ENCODE measurements at regions of chr2 and their contacts with region 1.

Region 1: GRCh38 chr2:104849618-104850141 is 4.2 kb upstream of the POU3F3 start:
- DNase-seq: peak; percentile 63
- H3K4me3 ChIP-seq: peak overlapping the region in 1 of 2 experiments; percentile 39; a peak in 1 of 4 replicates
- H3K27ac ChIP-seq: no peak overlapping the region
- H3K4me1 ChIP-seq: peaks cover 0 to 6% of the 10 kb centered on the region in 2 experiments; a peak in 1 of 4 replicates
- H3K27me3 ChIP-seq: peaks cover 59% of the 10 kb centered on the region
- CTCF ChIP-seq: peak; percentile 91
- EP300 ChIP-seq: no peak
- RAD21 ChIP-seq: peak; percentile 81

Region 2: GRCh38 chr2:103959174-103960128 is 890.2 kb before region 1 on chr2:
- CTCF ChIA-PET with region 1: interaction called, 60 read pairs
- POLR2A ChIA-PET with region 1: no interaction called
- DNase-seq: peak; percentile 35
- H3K4me3 ChIP-seq: peak overlapping the region in 1 of 2 experiments; percentile 33; a peak in 1 of 4 replicates
- H3K27ac ChIP-seq: no peak overlapping the region
- H3K4me1 ChIP-seq: no peaks in the 10 kb centered on the region
- H3K27me3 ChIP-seq: no peaks in the 10 kb centered on the region
- CTCF ChIP-seq: peak; percentile 64
- EP300 ChIP-seq: no peak
- RAD21 ChIP-seq: peak; percentile 73

Region 3: DNA sequence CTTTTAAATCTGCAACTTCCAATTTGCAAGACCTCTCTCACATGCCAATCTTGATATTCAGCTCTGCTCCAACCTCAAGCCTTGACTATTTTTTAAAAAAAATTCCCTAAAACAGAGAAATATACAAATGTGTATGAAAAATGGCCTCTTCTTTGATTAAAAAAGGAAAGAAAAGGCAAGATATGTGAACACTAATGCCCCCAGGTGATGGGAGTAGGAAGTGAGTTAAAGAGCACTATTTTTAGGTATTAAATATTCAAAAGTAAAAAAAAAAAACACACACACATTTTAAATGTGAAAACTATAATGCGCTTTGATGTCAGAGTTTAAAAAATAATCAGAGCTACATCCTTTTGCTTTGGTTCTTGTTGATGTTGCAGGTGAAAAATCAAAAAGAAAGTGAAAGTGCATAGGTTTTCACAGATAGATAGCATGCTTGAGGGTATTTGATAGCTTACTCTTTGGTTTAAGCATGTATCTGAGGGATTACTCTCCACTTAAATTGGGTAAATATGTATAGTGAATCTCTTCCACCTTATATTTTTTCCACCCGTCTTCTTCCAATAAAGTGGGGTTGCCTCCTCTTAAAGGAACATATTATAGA is 401.7 kb before region 1 on chr2:
- CTCF ChIA-PET with region 1: interaction called, 11 read pairs
- POLR2A ChIA-PET with region 1: no interaction called
- DNase-seq: no peak
- H3K4me3 ChIP-seq: no peak overlapping the region
- H3K27ac ChIP-seq: no peak overlapping the region
- H3K4me1 ChIP-seq: no peaks in the 10 kb centered on the region
- H3K27me3 ChIP-seq: no peaks in the 10 kb centered on the region
- CTCF ChIP-seq: no peak
- EP300 ChIP-seq: no peak
- RAD21 ChIP-seq: peak; percentile 45; the same call in 1 of the 2 replicates

Region 4: DNA sequence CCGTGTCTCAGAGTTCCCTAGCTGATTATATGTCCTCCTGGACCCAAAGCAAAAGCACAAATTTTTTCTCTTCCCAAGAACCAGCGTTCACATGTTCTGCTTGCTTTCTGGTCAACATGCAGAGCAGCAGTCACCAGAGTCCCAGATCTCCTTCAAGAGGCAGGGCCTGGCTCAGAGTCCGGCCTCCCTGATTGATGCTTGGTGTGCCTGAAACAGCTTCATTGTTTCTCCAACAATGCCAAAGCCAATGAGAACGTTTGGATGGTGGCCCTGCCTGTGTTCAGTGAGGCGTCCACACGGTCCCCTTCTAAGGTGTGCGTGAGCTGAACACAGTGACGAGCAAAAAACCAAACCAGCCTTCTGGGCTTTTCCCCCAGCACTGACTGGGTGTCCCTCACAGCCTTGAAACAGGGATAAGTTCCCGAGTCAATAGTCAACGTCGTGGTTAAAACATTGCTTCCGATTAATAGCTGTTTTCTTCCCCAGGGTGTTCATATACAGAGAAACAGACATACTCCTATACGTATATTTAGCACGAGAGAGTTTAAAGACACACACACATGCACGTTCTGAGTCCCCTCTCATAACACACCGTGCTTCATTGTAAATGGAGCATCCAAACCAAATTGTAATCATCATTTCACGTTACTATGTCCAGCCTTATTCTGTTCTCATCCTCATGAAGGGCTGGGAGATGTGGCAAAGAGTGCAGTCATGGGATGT is 15.1 kb before region 1 on chr2:
- CTCF ChIA-PET with region 1: interaction called, 31 read pairs
- POLR2A ChIA-PET with region 1: no interaction called
- DNase-seq: no peak
- H3K4me3 ChIP-seq: no peak overlapping the region
- H3K27ac ChIP-seq: no peak overlapping the region
- H3K4me1 ChIP-seq: no peaks in the 10 kb centered on the region
- H3K27me3 ChIP-seq: no peaks in the 10 kb centered on the region
- CTCF ChIP-seq: no peak
- EP300 ChIP-seq: no peak
- RAD21 ChIP-seq: no peak

Region 5: GRCh38 chr2:104872866-104873688 is 23.4 kb after region 1 on chr2:
- CTCF ChIA-PET with region 1: interaction called, 21 read pairs
- POLR2A ChIA-PET with region 1: no interaction called
- DNase-seq: peak; percentile 81
- H3K4me3 ChIP-seq: peak overlapping the region; percentile 53 to 64
- H3K27ac ChIP-seq: no peak overlapping the region
- H3K4me1 ChIP-seq: peaks cover 0 to 3% of the 10 kb centered on the region in 2 experiments; a peak in 1 of 4 replicates
- H3K27me3 ChIP-seq: peaks cover 25% of the 10 kb centered on the region
- CTCF ChIP-seq: peak; percentile 66
- EP300 ChIP-seq: no peak
- RAD21 ChIP-seq: peak; percentile 79

Measured in SK-N-SH (cell line).